Activated CD8-positive, alpha-beta T cell treated with anti-CD3 and anti-CD28 coated beads, Interleukin-2, amount 10 ng/mL, durations not matched to agents 7 days and 5 days (primary cell): ENCODE measurements at regions of chr4 and their contacts with region 1.

Region 1: DNA sequence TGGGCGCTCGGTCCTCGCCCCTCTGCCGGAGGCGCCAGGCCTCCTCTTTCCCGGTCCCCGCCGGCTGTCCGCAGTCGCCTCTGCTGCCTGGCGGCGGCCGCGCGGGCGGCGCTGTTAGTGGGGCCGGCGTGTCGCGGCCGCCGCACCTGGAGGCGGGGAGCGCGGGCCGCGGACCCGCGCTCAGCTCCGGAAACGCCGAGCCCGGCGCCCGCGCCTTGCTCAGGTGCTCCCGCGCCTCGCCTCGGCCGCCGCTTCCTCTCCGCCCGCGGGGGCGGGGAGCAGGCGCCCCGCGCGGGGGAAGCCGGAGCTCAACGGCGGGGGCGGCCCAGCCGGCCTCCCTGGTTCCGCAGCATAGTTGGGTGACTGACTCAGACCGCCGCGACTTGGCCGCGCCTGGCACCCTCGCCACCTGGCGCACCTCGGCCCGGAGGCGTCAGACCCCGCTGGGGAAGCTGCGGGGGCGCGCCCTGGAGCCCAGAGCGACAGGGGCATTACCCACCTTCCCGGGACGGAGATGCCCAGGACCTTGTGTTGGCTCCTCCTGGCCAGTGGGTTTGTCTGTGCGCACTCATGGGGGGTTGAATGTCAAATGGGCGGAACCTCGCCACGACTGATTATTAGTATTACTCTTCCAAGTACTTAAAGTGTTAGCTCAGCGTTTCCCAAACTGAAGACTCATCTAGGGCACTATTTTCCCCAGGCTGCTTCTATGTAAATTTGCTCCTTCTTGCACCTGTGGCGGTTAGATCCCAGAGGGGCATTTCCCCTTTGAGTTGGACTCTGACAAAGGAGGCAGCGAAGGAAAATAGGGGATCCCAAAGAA is at the start of gene ARAP2:
- DNase-seq: peak; percentile 74
- ATAC-seq: peak; percentile 80
- H3K4me3 Mint-ChIP-seq: peak within 1 kb of the TSS; percentile 84
- H3K27ac Mint-ChIP-seq: peak within 1 kb of the TSS; percentile 85
- H3K4me1 Mint-ChIP-seq: peaks cover 31% of the 10 kb centered on the region
- H3K27me3 Mint-ChIP-seq: no peaks in the 10 kb centered on the region
- total RNA-seq, gene ARAP2: 34.7 to 35.5 TPM

Region 2: GRCh38 chr4:36187723-36188333 is 56.6 kb before region 1 on chr4:
- CTCF ChIA-PET with region 1: interaction called, 44 read pairs
- POLR2A ChIA-PET with region 1: interaction called, 4 read pairs
- DNase-seq: peak; percentile 38
- ATAC-seq: no peak
- H3K4me3 Mint-ChIP-seq: no peak overlapping the region
- H3K27ac Mint-ChIP-seq: no peak overlapping the region
- H3K4me1 Mint-ChIP-seq: peaks cover 46% of the 10 kb centered on the region
- H3K27me3 Mint-ChIP-seq: no peaks in the 10 kb centered on the region

Region 3: DNA sequence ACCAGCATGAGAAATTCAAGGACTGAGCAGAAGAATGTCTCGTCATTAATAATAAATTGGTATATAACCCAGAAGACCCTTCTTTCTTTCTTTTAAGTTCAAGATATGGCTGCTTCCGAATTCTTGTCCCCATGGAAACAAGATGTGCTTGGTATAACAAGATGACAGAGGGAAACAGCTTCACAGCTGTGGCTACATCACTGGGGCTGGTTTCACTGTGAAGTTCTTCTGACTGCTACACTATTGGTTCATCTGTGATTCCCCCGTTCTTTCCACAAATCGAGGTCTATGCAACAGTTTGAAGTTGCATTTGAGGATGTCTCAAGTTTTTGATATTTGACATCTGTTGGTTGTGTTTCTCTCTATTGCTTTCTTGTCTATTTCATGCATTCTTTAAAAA is 24.6 kb after region 1 on chr4:
- CTCF ChIA-PET with region 1: interaction called, 12 read pairs
- POLR2A ChIA-PET with region 1: interaction called, 9 read pairs
- DNase-seq: peak; percentile 63
- ATAC-seq: peak; percentile 95
- H3K4me3 Mint-ChIP-seq: no peak overlapping the region
- H3K27ac Mint-ChIP-seq: peak overlapping the region; percentile 41
- H3K4me1 Mint-ChIP-seq: peaks cover 40% of the 10 kb centered on the region
- H3K27me3 Mint-ChIP-seq: no peaks in the 10 kb centered on the region

Region 4: GRCh38 chr4:36285784-36286480 is 41.5 kb after region 1 on chr4:
- CTCF ChIA-PET with region 1: interaction called, 19 read pairs
- POLR2A ChIA-PET with region 1: interaction called, 33 read pairs
- DNase-seq: peak; percentile 80
- ATAC-seq: peak; percentile 98
- H3K4me3 Mint-ChIP-seq: peak overlapping the region; percentile 56
- H3K27ac Mint-ChIP-seq: peak overlapping the region; percentile 84
- H3K4me1 Mint-ChIP-seq: peaks cover 47% of the 10 kb centered on the region
- H3K27me3 Mint-ChIP-seq: no peaks in the 10 kb centered on the region

Region 5: DNA sequence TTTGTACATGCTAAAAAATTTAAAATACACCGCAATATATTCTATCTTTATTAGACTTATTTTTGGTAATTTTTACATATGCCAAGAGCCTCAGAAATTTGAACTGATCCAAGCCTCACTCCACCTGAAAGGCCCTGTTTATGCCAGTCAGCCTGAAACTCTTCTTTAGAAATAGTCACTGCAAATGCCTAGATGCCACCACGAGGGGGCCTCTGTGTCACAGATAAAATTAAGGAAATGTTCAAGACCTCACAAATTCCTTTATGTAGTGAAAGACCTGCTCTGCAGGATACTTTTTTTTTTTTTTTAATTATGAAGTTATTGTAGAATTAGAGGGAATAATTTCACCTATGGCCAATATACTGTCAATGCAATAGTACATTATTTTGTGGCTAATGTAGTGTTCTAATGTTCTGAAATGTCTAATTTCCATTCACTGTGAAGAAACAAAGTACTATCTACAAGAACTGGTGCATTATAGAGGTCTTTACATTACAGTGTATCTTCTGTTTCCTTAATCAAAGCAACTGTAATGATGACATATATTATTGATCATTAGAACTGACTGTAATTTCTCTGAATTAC is 106.7 kb after region 1 on chr4:
- CTCF ChIA-PET with region 1: interaction called, 15 read pairs
- POLR2A ChIA-PET with region 1: interaction called, 13 read pairs
- DNase-seq: peak; percentile 85
- ATAC-seq: peak; percentile 69
- H3K4me3 Mint-ChIP-seq: no peak overlapping the region
- H3K27ac Mint-ChIP-seq: no peak overlapping the region
- H3K4me1 Mint-ChIP-seq: peaks cover 24% of the 10 kb centered on the region
- H3K27me3 Mint-ChIP-seq: peaks cover 3% of the 10 kb centered on the region